ENCODE measurements at regions of chr7 and their contacts with region 1.

Region 1: DNA sequence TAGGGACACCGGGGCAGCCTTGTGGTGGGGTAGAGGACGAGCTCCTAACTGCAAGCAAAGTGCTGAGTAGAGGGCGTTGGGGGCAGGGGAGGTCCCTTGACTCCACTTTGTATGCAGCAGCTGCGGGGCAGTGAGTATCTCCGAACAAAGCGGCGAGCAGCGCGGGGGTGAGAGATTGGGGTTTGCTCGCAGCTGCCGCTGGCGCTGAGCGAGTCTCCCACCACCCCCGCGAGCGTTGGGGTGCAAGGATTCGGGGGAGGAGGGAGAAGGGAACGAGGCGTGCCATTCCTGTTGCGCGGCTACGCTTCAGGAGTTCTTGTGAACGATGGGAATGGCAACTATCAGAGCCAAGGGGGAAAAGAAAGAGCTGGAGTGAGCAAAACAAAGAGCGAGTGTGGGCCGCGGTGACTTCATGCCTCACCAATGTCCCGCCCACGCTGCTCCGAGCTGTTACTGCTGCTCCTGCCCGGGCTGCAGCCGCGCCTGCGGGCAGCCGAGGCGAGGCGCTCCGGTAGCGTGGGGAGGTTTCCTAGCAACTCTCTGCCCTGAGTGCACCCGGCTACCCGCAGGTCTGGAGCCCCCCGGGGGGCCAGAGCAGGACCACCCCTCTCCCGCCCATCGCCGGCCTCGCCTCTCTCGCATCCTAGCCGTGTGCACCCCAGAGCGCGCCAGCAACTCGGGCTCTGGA is at the start of gene ITGB8:
- DNase-seq: peak; percentile 90
- H3K4me3 ChIP-seq: peak within 1 kb of the TSS; percentile 51 to 62 (median 53)
- H3K27ac ChIP-seq: peak within 1 kb of the TSS; percentile 87
- H3K4me1 ChIP-seq: peaks cover 14% of the 10 kb centered on the region
- H3K27me3 ChIP-seq: no peaks in the 10 kb centered on the region
- CTCF ChIP-seq: no peak
- POLR2A ChIP-seq: no peak
- total RNA-seq, gene ITGB8: 6.5 and 8.2 TPM in 2 replicates

Region 2: DNA sequence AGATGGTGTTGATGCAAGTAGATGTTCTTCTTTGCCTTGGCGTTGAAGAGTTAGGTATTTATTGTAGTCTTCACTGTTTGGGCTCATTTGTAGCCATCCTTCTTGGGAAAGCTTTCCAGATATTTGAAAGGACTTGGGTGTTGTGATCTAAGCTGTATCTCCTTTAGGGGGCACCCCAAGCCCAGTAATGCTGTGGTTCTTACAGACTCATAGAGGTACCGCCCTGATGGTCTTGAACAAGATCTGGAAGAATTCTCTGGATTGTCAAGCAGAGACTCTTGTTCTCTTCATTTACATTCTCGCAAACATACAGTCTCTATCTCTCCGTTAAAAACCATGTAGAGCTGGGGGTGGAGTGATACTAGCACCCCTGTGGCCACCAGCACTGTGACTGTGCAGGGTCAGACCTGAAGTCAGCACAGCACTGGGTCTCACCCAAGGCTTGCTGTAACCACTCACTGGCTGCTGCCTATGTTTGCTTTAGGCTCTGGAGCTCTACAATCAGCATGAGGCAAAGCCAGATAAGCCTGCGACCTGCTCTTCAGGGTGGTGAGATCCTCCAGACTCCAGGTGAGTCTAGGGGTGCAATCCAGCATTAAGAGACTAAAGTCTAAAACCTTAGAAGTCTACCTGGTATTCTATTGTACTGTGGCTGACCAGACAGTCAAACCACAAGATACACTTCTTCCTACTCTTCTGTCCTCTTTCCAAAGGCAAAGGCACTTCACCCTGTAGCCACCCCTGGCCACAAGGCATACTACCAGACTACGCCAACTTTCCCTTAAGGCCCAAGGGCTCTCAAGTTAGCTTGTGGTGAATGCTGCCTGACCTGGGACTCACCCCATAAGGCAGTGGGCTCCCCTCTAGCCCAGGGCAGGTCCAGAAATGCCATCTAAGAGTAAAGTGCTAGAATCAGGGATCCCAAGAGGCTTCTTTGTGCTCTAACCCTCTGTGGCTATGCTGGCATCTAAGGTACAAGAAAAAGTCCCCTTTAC is 347.2 kb before region 1 on chr7:
- CTCF ChIA-PET with region 1: no interaction called
- POLR2A ChIA-PET with region 1: no interaction called
- dilution Hi-C with region 1: no loop called
- intact Hi-C with region 1: loop called (anchors 5 kb)
- DNase-seq: peak; percentile 58
- H3K4me3 ChIP-seq: no peak overlapping the region
- H3K27ac ChIP-seq: no peak overlapping the region
- H3K4me1 ChIP-seq: no peaks in the 10 kb centered on the region
- H3K27me3 ChIP-seq: no peaks in the 10 kb centered on the region
- CTCF ChIP-seq: peak in 1 of 2 donors; percentile 31
- POLR2A ChIP-seq: no peak

Region 3: GRCh38 chr7:20310963-20311742 is 19.2 kb before region 1 on chr7:
- CTCF ChIA-PET with region 1: interaction called, 8 read pairs
- POLR2A ChIA-PET with region 1: no interaction called
- dilution Hi-C with region 1: no loop called
- intact Hi-C with region 1: loop called (anchors 2 kb)
- DNase-seq: peak; percentile 76
- H3K4me3 ChIP-seq: no peak overlapping the region
- H3K27ac ChIP-seq: no peak overlapping the region
- H3K4me1 ChIP-seq: peaks cover 19% of the 10 kb centered on the region
- H3K27me3 ChIP-seq: no peaks in the 10 kb centered on the region
- CTCF ChIP-seq: peak; percentile 19 to 26
- POLR2A ChIP-seq: no peak

Region 4: GRCh38 chr7:20385126-20385525 is 54.7 kb after region 1 on chr7:
- CTCF ChIA-PET with region 1: no interaction called
- POLR2A ChIA-PET with region 1: no interaction called
- dilution Hi-C with region 1: no loop called
- intact Hi-C with region 1: loop called (anchors 2 kb)
- DNase-seq: peak; percentile 67
- H3K4me3 ChIP-seq: no peak overlapping the region
- H3K27ac ChIP-seq: peak overlapping the region; percentile 3
- H3K4me1 ChIP-seq: peaks cover 28% of the 10 kb centered on the region
- H3K27me3 ChIP-seq: no peaks in the 10 kb centered on the region
- CTCF ChIP-seq: no peak
- POLR2A ChIP-seq: no peak

Region 5: GRCh38 chr7:20440472-20441105 is 110.2 kb after region 1 on chr7:
- CTCF ChIA-PET with region 1: interaction called, 3 read pairs
- POLR2A ChIA-PET with region 1: no interaction called
- dilution Hi-C with region 1: no loop called
- intact Hi-C with region 1: loop called (anchors 2 kb)
- DNase-seq: peak; percentile 40
- H3K4me3 ChIP-seq: no peak overlapping the region
- H3K27ac ChIP-seq: no peak overlapping the region
- H3K4me1 ChIP-seq: peaks cover 14% of the 10 kb centered on the region
- H3K27me3 ChIP-seq: no peaks in the 10 kb centered on the region
- CTCF ChIP-seq: peak; percentile 28 to 33
- POLR2A ChIP-seq: no peak

Region 6: GRCh38 chr7:20560325-20561180 is 230.2 kb after region 1 on chr7:
- CTCF ChIA-PET with region 1: interaction called, 3 read pairs
- POLR2A ChIA-PET with region 1: no interaction called
- dilution Hi-C with region 1: no loop called
- intact Hi-C with region 1: loop called (anchors 1 kb)
- DNase-seq: no peak
- H3K4me3 ChIP-seq: no peak overlapping the region
- H3K27ac ChIP-seq: peak overlapping the region; percentile 100
- H3K4me1 ChIP-seq: peaks cover 24% of the 10 kb centered on the region
- H3K27me3 ChIP-seq: no peaks in the 10 kb centered on the region
- CTCF ChIP-seq: no peak
- POLR2A ChIP-seq: no peak

Measured in endothelial cell of umbilical vein (primary cell).